IMR-90 (cell line): ENCODE measurements at regions of chr7 and their contacts with region 1.

Region 1: DNA sequence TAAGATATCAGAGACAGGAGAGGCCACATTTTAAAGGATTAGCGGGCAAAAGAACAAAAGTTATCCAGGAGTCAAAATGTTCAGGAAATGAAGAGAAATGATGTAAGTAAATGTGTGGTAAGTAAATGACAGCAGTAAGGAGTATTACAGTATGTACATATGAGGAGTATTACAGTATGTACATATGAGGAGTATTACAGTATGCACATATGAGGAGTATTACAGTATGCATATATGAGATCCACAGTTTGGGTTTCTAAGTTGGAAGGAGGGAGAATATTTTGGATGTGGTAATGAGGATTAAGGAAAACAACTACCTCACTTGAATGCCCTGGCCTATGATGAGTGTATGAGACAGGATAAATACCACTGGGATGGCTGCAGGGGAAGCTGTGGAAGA is 192.4 kb upstream of the DGKB start:
- DNase-seq: no peak
- ATAC-seq: no peak
- H3K4me3 ChIP-seq: no peak overlapping the region
- H3K27ac ChIP-seq: no peak overlapping the region
- H3K4me1 ChIP-seq: no peaks in the 10 kb centered on the region
- H3K27me3 ChIP-seq: no peaks in the 10 kb centered on the region
- CTCF ChIP-seq: no peak
- POLR2A ChIP-seq: no peak
- RAD21 ChIP-seq: no peak

Region 2: GRCh38 chr7:14817829-14818614 is 277.0 kb before region 1 on chr7:
- CTCF ChIA-PET with region 1: no interaction called
- POLR2A ChIA-PET with region 1: no interaction called
- dilution Hi-C with region 1: no loop called
- in situ Hi-C with region 1: no loop called
- intact Hi-C with region 1: loop called (anchors 5 kb)
- DNase-seq: no peak
- ATAC-seq: no peak
- H3K4me3 ChIP-seq: no peak overlapping the region
- H3K27ac ChIP-seq: no peak overlapping the region
- H3K4me1 ChIP-seq: no peaks in the 10 kb centered on the region
- H3K27me3 ChIP-seq: no peaks in the 10 kb centered on the region
- CTCF ChIP-seq: no peak
- POLR2A ChIP-seq: no peak
- RAD21 ChIP-seq: no peak

Region 3: DNA sequence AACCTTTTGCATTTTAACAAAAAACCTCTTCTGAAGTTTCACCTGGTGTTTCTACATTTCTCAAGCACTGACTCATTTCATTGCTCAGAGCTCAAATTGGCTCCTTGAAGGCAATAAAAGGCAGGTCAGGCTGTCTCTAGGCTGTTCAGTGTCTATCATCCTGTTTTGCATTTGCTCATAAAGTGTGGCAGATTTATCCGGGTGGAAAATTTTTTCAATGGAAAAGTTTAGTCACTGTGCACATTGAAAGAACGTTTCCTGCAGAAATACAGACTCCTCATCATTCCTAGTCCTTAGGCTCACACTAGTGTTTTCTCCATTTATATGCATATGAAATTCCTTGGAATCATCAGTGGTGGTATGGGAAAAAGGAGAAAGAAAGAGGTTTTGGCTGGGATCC is 78.2 kb before region 1 on chr7:
- CTCF ChIA-PET with region 1: no interaction called
- POLR2A ChIA-PET with region 1: no interaction called
- dilution Hi-C with region 1: no loop called
- in situ Hi-C with region 1: no loop called
- intact Hi-C with region 1: no loop called
- DNase-seq: no peak
- ATAC-seq: no peak
- H3K4me3 ChIP-seq: no peak overlapping the region
- H3K27ac ChIP-seq: no peak overlapping the region
- H3K4me1 ChIP-seq: no peaks in the 10 kb centered on the region
- H3K27me3 ChIP-seq: no peaks in the 10 kb centered on the region
- CTCF ChIP-seq: no peak
- POLR2A ChIP-seq: no peak
- RAD21 ChIP-seq: no peak